Activated CD8-positive, alpha-beta T cell treated with anti-CD3 and anti-CD28 coated beads for 36 hours (primary cell): ENCODE measurements at regions of chr22 and their contacts with region 1.

Region 1: DNA sequence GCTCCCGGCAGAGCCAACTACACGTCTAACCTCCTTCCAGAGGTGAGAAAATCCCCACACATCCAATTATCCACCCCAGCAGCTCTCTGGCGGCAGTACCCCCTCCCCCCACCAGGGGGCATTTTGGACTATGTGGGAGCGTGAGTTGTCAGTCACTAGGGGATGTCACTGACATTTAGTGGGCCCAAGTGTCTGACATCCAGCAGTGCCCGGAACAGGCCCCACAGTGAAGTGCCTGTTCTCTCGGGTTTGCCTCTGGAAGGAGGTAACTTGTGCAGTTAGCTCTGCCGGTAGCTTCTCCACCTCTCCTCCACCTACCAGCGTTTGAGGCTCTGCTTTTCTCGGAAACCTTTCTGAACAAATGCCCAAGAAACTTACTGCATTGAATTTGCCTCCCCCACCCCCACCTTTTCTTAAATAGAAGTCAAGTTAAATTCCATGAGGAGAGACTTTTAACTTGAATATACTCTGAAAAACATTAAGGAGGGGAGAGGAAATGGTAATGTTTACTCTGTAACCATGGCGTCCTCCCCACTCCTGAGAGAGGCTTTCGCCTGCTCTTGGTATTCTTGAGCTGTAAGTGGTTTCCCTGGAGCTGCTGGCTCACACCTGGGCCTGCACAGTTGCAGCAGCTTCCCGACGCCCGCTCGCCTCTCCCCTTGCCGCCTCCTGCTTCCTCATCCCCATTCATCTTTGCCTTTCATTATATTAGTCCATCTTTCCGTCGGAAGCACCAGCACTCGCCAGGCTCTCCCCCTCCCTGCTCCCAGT is 112.8 kb downstream of the WNT7B start:
- DNase-seq: peak; percentile 86
- ATAC-seq: peak; percentile 94
- H3K4me3 Mint-ChIP-seq: no peak overlapping the region
- H3K27ac Mint-ChIP-seq: no peak overlapping the region
- H3K4me1 Mint-ChIP-seq: peaks cover 7% of the 10 kb centered on the region
- H3K27me3 Mint-ChIP-seq: peaks cover 39% of the 10 kb centered on the region
- CTCF ChIP-seq: peak; percentile 97

Region 2: GRCh38 chr22:45577746-45578523 is 286.2 kb before region 1 on chr22:
- CTCF ChIA-PET with region 1: interaction called, 13 read pairs
- POLR2A ChIA-PET with region 1: no interaction called
- intact Hi-C with region 1: no loop called
- DNase-seq: peak; percentile 83
- ATAC-seq: peak; percentile 89
- H3K4me3 Mint-ChIP-seq: no peak overlapping the region
- H3K27ac Mint-ChIP-seq: no peak overlapping the region
- H3K4me1 Mint-ChIP-seq: no peaks in the 10 kb centered on the region
- H3K27me3 Mint-ChIP-seq: peaks cover 7% of the 10 kb centered on the region
- CTCF ChIP-seq: peak; percentile 98

Region 3: DNA sequence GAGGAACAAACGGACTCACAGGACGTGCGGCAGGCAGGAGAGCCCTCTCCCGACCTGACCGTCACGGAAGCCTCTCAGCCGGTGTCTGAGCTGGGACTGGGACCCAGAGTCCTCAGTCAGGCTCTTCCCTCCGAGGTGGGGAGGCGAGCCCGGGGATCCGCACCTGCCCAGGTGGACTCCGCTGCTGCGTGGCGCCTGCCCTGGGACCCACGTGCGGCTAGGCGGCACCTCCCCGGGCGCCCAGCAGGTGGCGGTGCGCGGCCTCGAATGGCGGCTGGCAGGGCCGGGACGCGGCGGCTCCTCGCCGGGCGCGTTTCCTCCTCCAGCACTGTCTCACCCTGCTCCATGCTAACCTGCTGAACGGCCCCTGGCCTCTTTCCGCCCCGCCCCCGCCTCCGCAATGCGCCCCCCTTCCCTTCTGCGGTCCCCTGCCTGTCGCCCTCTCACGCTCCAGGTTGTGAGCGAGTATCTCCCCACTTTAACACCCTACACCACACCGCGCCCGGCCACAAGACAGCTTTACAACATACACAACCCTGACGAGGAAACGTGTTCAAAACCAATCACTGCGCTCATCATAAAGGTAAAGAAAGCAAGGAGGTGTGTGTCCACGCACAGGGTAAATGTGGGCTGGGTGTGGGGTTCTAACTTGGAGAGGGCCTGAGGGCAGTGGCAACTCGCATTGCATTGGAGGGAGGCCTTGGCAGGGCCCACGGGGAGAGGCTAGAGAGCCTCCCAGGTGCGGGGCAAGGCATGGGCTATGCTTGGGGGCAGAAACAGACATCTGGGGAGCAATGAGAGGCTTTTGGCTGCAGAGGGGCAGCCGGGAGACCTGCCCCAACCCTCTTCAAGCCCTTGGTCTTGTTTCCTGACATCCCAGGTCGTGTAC is 218.4 kb before region 1 on chr22:
- CTCF ChIA-PET with region 1: interaction called, 22 read pairs
- POLR2A ChIA-PET with region 1: no interaction called
- intact Hi-C with region 1: no loop called
- DNase-seq: peak; percentile 84
- ATAC-seq: peak; percentile 97
- H3K4me3 Mint-ChIP-seq: peak overlapping the region; percentile 9
- H3K27ac Mint-ChIP-seq: no peak overlapping the region
- H3K4me1 Mint-ChIP-seq: peaks cover 16% of the 10 kb centered on the region
- H3K27me3 Mint-ChIP-seq: peaks cover 18% of the 10 kb centered on the region
- CTCF ChIP-seq: peak; percentile 97

Region 4: GRCh38 chr22:45842291-45842991 is 21.7 kb before region 1 on chr22:
- CTCF ChIA-PET with region 1: interaction called, 16 read pairs
- POLR2A ChIA-PET with region 1: no interaction called
- intact Hi-C with region 1: no loop called
- DNase-seq: no peak
- ATAC-seq: no peak
- H3K4me3 Mint-ChIP-seq: no peak overlapping the region
- H3K27ac Mint-ChIP-seq: no peak overlapping the region
- H3K4me1 Mint-ChIP-seq: no peaks in the 10 kb centered on the region
- H3K27me3 Mint-ChIP-seq: no peaks in the 10 kb centered on the region
- CTCF ChIP-seq: no peak

Region 5: DNA sequence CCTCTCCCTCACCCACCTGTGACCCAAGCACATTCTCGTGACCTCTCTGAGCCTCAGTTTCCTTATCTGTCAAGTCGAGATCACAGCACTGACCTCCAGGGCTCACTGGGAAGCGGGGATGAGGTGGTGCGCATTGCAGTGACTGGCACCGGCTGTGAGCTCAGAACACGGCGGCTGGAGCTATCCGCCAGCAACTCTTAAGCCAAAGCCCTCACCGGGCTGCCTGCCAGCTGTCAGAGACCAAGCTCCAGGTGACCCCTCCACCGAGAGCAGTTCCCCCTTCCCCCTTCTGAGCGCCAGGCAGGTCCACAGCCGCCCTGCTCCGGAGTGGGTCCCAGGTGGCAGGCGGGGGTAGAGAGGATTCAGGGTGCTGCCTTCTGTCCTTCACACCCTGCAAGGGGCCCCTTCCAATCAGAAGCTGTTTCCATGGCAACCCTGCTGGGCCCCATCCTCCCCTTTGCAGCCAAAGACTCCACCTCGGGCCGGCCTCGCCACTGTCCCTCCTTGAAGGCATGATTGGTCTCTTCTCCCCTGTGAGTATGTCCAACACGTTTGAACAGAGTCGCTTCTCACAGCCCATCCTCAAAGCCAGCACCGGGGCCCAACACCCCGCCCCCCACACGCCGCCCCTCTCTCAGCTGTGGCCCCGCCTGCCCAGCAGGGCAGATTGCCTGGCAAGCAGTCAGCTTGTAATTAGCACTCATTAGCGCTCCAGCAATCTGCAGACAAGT is 14.1 kb after region 1 on chr22:
- CTCF ChIA-PET with region 1: interaction called, 33 read pairs
- POLR2A ChIA-PET with region 1: no interaction called
- intact Hi-C with region 1: no loop called
- DNase-seq: no peak
- ATAC-seq: no peak
- H3K4me3 Mint-ChIP-seq: no peak overlapping the region
- H3K27ac Mint-ChIP-seq: no peak overlapping the region
- H3K4me1 Mint-ChIP-seq: no peaks in the 10 kb centered on the region
- H3K27me3 Mint-ChIP-seq: peaks cover 24% of the 10 kb centered on the region
- CTCF ChIP-seq: no peak

Region 6: DNA sequence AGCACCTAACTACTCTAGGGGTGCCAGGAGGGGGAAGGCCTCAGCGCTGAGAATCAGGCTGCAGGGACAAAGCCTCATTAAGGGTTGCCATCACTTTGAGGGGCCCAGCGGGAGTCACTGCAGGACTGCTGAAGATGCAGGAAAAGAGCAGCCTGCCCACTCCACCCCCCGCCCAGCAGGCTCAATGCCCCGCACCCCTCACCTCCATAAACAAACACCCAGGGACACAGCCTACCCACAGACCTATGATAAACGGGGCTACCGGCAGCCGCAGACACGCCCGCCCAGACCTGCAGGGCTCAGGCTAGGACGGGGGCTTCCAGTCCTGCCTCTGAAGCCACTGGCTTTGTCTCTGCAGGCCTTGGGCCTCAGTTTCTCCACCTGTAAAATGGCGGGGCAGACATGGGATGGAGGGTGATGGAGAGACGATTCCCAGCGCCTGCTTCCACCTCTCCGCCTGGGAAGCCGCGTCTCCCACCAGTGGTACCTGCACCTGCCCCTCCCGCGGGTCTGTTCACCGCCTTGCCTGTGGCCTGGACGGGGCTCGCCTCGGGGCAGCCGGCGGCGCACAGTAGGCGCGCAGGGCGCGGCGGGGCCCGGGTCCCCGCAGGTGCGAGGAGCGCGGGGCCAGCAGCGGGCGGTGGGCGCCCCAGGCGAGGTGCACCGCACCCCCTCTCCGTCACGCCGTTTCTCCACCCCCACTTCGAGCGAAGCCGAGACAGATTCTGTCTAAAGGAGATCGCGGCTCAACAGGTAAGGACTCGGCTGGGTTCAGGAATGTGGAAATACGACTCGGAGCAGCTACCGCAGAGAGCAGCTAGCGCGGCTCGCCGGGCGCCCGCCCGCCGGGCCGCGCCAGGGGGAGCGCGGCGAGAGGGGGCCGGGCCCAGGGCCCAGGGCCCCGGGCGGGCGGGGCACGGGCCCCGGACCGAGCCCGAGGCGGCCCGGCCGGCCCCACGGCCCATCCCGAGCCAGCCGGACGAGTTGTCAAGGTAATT is 111.3 kb after region 1 on chr22:
- CTCF ChIA-PET with region 1: interaction called, 5 read pairs
- POLR2A ChIA-PET with region 1: no interaction called
- intact Hi-C with region 1: loop called (anchors 2 kb)
- DNase-seq: no peak
- ATAC-seq: no peak
- H3K4me3 Mint-ChIP-seq: no peak overlapping the region
- H3K27ac Mint-ChIP-seq: no peak overlapping the region
- H3K4me1 Mint-ChIP-seq: peaks cover 12% of the 10 kb centered on the region
- H3K27me3 Mint-ChIP-seq: peaks cover 47% of the 10 kb centered on the region
- CTCF ChIP-seq: no peak